ENCODE measurements at regions of chr3 and their contacts with region 1.

Region 1: GRCh38 chr3:186849374-186849975 is 7.0 kb downstream of the ADIPOQ start:
- DNase-seq: no peak
- ATAC-seq: peak; percentile 58 to 64

Region 2: DNA sequence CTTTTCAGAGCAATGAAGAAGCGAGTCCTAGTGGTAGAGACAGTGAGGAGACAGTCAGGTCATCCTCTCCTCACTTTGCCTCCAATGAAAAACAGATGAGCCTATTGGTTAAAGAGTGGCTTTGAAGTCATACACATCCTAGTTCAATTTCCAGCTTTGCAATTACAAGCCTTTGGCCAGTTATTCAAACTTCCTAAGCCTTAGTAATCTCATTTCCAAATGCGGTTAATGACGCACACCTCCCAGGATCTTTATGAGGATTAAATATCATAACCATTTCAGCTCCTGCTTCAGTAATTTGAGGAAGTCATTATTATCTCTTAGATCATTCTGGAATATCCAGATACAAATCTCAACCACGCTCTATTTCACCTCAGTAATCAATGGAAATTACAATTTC is 70.8 kb after region 1 on chr3:
- intact Hi-C with region 1: loop called (anchors 10 kb)
- DNase-seq: no peak
- ATAC-seq: no peak

Region 3: GRCh38 chr3:186985661-186986364 is 136.3 kb after region 1 on chr3:
- intact Hi-C with region 1: loop called in 1 of 2 experiments (anchors 10 kb)
- DNase-seq: no peak
- ATAC-seq: peak; percentile 15 to 63

Region 4: GRCh38 chr3:187164885-187165543 is 315.5 kb after region 1 on chr3:
- intact Hi-C with region 1: loop called (anchors 2 to 10 kb)
- DNase-seq: no peak
- ATAC-seq: peak; percentile 27 to 40

Region 5: GRCh38 chr3:187465503-187465902 is 616.0 kb after region 1 on chr3:
- intact Hi-C with region 1: no loop called
- DNase-seq: no peak
- ATAC-seq: no peak

Measured in left cardiac atrium (tissue), 4 donors.